Head of caudate nucleus (tissue), 42 donors: ENCODE measurements at regions of chr10 and their contacts with region 1.

Region 1: DNA sequence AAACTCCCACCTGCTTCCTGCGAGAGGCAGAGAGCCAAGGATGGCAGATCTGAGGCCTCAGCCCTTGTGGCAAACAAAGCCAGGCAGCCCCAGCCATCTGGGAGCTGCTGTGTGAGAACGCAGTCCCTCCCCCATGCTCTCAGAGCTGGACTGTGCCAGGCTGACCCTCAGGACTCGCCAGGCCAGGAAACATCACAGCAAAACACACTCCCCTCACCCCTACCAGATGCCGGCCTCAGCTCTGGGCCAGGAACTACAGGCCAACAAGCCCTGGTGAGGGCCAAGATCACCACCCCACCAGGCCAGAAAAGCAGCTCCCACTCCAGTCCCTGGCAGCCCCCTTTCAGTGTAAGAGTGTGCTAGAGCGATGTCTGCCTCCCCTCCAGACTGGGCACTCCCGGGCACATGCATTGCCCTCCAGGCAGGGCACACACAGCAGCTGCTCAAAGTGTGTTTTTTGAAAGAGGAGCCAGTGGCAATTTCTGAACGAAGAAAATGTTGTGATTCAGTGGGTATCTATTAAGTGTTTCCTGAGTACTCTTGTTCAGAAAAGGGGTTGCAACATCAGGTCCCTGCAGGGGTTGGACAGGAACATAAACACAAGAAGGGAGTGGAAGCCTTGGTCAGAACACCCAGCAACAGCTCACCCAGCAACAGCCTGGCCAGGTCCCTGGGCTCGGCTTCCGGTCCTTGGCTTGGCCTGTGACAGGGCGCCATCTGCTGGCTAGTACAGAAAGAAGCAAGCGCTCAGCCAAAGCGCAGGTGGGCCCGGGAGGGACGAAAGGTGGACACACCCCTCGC is 18.3 kb downstream of the LRRC20 start:
- DNase-seq: peak; percentile 81 to 96 (median 91)

Region 2: DNA sequence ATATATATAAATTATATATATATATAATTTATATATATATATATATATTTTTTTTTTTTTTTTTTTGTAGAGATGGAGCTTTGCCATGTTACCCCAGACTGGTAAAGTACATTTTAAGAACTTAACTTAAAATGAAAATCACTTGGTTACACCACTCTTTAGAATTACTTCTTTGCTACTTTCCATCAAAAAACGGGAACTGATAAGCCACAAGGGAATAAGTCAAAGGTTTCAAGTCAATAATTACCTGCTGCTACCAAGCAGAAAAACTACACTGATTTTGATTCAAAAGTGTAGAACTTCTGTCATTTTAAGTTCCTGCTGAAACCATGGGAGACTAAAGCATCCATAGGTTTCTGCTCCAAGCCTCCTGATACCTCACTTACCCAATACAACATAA is 143.1 kb before region 1 on chr10:
- intact Hi-C with region 1: loop called (anchors 1 kb)
- DNase-seq: no peak

Region 3: GRCh38 chr10:70312972-70313371 is 51.2 kb before region 1 on chr10:
- intact Hi-C with region 1: no loop called
- DNase-seq: no peak